Dorsolateral prefrontal cortex (tissue), 120 donors: ENCODE measurements at regions of chr20 and their contacts with region 1.

Region 1: DNA sequence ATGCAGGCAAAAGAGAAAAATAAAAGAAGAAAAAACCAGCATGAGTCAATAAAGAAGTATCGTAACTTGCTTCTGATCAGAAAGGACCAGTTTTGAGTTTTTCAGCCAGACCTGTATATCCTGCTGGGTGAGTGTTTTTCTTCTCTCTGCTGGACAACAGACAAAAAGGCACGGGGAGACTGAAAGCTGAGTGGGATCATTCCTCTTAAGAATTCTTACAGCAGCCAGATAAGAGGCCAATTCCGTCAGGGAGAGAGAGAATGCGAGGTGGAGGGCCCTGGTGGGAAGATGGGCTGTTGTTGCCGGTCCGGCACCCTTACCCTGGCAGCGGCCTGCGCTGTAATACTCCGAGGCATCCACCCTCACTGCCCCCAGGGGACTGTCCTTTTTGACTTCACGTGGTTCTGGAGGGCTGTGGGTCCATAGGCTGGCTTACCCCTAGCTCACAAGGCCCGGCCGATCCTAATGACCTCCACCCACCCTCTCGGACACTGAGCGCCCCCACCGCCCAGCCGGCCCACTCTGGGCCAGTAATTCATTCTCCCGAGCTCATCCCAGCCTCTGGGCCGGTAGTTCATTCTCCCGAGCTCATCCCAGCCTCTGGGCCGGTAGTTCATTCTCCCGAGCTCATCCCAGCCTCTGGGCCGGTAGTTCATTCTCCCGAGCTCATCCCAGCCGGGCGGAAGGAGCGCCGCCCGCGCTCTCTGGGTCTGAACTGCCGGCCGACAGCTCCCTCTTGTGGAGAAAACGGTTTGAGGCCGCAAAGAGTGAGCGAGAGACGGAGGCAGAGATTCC is 118.3 kb upstream of the SIRPA start:
- DNase-seq: peak; percentile 79 to 93 (median 88)
- H3K4me3 ChIP-seq: peak overlapping the region; percentile 48 to 83 (median 69)
- H3K27ac ChIP-seq: peak overlapping the region in 54 of 59 donors; percentile 12 to 94 (median 75)
- H3K27me3 ChIP-seq: no peaks in the 10 kb centered on the region
- CTCF ChIP-seq: peak; percentile 73 to 93 (median 85)

Region 2: GRCh38 chr20:1325173-1326030 is 451.5 kb before region 1 on chr20:
- intact Hi-C with region 1: loop called in 1 of 2 experiments (anchors 10 kb)
- DNase-seq: peak; percentile 92 to 96 (median 95)
- H3K4me3 ChIP-seq: peak overlapping the region; percentile 62 to 100 (median 93)
- H3K27ac ChIP-seq: peak overlapping the region; percentile 66 to 100 (median 97)
- H3K27me3 ChIP-seq: no peaks in the 10 kb centered on the region
- CTCF ChIP-seq: peak in 55 of 56 donors; percentile 14 to 76 (median 59)

Region 3: DNA sequence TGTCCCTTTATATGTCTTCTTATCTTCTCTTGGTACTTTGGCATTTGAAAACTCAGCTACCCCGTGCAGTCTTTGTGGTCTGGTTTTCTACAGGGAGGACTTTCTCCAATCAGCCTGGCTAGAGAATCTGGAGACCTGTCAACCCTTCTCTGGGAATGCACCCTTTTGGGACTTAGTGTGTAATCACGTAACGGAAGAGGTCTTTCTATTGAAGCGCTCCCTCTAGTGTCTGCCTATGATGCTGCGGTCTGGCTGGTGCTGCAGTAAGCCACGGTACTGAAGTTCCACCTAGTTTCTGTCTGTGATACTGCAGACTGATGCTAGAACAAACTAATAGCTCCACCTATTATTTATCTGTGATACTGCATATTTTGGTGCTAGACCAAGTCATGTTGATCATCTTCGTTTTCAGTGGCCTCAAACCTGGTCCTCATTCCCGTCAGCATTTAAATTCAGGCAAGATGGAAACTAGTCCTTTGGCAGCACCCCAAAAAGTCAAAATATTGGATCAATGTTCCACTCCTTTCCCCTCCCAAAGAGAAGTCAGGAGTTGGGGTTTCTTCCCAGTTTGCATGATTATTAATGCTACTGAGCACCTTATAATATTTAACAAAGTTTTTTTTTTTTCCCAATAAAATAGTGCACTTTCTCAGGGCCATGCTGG is 273.2 kb before region 1 on chr20:
- intact Hi-C with region 1: loop called (anchors 5 to 10 kb)
- DNase-seq: peak; percentile 13 to 78 (median 62)
- H3K4me3 ChIP-seq: peak overlapping the region in 6 of 59 donors; percentile 1 to 23 (median 15)
- H3K27ac ChIP-seq: no peak overlapping the region
- H3K27me3 ChIP-seq: peaks cover 0 to 8% (median 0%) of the 10 kb centered on the region in 45 donors
- CTCF ChIP-seq: peak; percentile 58 to 95 (median 87)

Region 4: GRCh38 chr20:1509237-1509636 is 267.6 kb before region 1 on chr20:
- intact Hi-C with region 1: loop called (anchors 5 to 10 kb)
- DNase-seq: peak in 8 of 10 donors; percentile 4 to 64 (median 50)
- H3K4me3 ChIP-seq: no peak overlapping the region
- H3K27ac ChIP-seq: peak overlapping the region in 7 of 59 donors; percentile 12 to 44 (median 36)
- H3K27me3 ChIP-seq: no peaks in the 10 kb centered on the region
- CTCF ChIP-seq: peak in 54 of 56 donors; percentile 30 to 73 (median 58)

Region 5: DNA sequence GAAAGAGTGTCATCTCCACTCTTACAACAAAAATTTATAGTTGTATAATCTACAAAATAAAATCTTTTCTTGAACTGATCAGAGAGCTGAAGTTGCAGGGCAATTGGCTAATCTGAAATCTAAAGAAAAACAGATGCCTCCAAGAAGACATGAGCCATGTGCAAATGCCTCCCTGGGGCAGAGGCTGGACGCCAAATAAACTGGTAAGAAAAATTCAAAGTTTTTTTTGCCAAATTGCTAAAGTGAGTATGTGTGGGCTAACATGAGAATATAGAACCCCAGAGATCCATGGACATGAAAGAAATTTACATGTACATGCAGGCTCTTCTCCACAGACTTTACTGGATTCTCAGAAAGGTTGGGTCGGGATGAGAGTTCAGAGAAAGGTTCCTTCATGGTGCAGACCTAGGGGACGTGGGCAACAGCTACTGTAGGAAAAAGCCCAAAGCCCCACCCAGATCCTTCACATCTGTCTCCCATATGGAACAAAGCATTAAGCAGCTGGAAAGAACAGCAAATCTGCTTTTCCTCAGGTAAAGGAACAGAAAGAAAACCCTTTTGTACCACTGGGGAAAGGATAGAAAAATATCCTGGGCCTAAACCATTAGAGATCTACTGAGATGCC is 28.8 kb before region 1 on chr20:
- intact Hi-C with region 1: no loop called
- DNase-seq: no peak
- H3K4me3 ChIP-seq: no peak overlapping the region
- H3K27ac ChIP-seq: no peak overlapping the region
- H3K27me3 ChIP-seq: no peaks in the 10 kb centered on the region
- CTCF ChIP-seq: no peak

Region 6: DNA sequence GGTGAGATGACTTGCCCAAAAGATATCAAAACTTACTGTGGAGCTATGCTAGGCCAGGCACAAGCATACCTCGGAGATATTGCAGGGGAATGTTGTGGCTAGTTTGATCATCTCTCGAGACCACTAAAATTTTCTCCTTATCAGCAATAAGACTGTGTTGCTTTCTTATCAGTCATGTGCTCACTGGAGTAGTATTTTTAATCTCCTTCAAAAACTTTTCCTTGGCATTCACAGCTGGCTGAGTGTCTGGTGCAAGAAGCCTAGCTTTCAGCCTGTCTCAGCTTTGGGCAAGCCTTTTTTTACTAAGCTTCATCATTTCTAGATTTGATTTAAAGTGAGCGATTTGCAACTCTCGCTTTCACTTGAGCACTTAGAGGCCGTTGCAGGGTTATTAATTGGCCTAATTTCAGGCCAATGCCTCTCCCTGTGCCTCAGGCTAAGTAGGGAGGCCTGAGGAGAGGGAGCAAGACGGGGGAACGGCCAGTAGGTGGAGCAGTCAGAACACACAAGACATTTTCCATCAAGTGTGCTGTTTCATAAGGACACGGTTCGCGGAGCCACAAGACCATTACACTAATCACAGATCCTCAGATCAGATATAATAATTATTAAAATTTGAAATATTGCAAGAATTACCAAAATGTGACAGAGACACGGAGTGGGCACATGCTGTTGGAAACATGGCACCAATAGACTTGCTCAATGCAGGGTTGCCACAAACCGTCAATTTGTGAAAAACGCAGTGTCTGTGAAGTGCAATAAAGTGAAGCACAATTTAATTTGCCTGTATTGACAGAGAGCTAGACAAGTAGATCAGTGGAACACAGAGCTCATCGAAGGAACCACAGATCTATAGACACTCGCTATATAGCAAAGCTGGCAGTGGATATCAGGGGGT is 12.5 kb before region 1 on chr20:
- intact Hi-C with region 1: loop called in 1 of 2 experiments (anchors 2 kb)
- DNase-seq: peak; percentile 65 to 92 (median 81)
- H3K4me3 ChIP-seq: peak overlapping the region in 21 of 59 donors; percentile 2 to 41 (median 29)
- H3K27ac ChIP-seq: peak overlapping the region in 2 of 59 donors; percentile 3 to 34
- H3K27me3 ChIP-seq: no peaks in the 10 kb centered on the region
- CTCF ChIP-seq: peak; percentile 62 to 96 (median 84)

Region 7: DNA sequence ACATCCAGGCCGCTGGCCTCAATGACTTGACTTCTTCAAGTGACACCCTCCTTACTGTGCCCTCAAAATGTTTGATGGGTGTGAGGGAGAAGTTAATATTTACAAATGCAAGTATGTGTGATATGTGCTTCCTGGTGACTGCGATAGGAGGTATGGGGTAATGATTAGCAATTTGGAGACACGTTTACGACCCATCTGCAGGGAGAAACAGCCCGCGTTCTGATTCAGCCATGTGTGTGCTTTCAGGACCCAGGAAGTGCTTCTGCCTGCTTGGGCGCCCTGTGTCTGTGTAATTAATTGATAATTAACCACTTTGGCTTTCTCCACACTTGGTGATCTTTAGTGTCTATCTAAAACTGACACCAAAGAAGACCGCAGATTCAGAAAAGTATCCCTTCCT is 143.4 kb after region 1 on chr20:
- intact Hi-C with region 1: no loop called
- DNase-seq: no peak
- H3K4me3 ChIP-seq: peak overlapping the region in 1 of 59 donors; percentile 3
- H3K27ac ChIP-seq: peak overlapping the region in 56 of 59 donors; percentile 2 to 83 (median 66)
- H3K27me3 ChIP-seq: no peaks in the 10 kb centered on the region
- CTCF ChIP-seq: no peak

Region 8: GRCh38 chr20:2151858-2152281 is 375.0 kb after region 1 on chr20:
- intact Hi-C with region 1: no loop called
- DNase-seq: no peak
- H3K4me3 ChIP-seq: no peak overlapping the region
- H3K27ac ChIP-seq: peak overlapping the region in 1 of 59 donors; percentile 3
- H3K27me3 ChIP-seq: no peaks in the 10 kb centered on the region
- CTCF ChIP-seq: no peak